Psoas muscle (tissue), 8 donors: ENCODE measurements at regions of chr7 and their contacts with region 1.

Region 1: GRCh38 chr7:112550468-112551060 is 69.8 kb downstream of the LSMEM1 start:
- DNase-seq: no peak
- ATAC-seq: peak in 3 of 4 donors; percentile 37 to 85 (median 70)
- H3K4me3 ChIP-seq: no peak overlapping the region
- H3K27ac ChIP-seq: no peak overlapping the region
- H3K4me1 ChIP-seq: no peaks in the 10 kb centered on the region
- H3K27me3 ChIP-seq: no peaks in the 10 kb centered on the region
- CTCF ChIP-seq: peak; percentile 82

Region 2: GRCh38 chr7:112898432-112899290 is 348.1 kb after region 1 on chr7:
- intact Hi-C with region 1: loop called (anchors 2 to 10 kb)
- DNase-seq: no peak
- ATAC-seq: peak; percentile 63 to 84 (median 72)
- H3K4me3 ChIP-seq: no peak overlapping the region
- H3K27ac ChIP-seq: no peak overlapping the region
- H3K4me1 ChIP-seq: no peaks in the 10 kb centered on the region
- H3K27me3 ChIP-seq: no peaks in the 10 kb centered on the region
- CTCF ChIP-seq: peak; percentile 72

Region 3: DNA sequence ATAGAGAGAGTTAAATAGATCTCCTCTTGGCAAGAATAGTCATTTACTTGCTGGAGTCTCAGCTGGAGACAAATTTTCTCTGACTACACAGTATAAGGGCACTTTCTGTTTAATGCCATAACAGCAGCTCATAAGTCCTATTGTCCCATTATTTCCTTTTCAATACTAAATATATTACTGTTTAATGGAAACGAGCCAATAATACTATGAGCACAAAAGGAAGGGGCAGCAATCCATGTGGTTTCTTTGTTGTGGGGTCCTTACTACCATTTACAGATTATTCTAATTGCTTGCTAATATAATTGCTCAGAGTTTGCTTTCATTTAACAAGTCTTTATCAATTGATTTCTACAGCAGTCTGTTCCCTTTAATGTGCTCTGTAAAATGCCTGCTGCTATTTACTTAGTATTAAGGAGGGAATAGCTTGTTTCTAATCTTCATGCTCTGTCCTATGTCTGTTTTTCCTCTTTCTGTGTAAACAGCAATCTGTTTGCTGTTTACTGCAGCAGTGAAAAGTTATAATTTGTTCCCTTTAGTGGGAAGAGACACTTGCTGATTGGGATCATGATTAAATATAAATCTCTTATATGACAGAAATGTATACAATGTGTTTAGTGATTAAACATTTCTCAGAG is 864.0 kb after region 1 on chr7:
- intact Hi-C with region 1: loop called in 1 of 2 experiments (anchors 10 kb)
- DNase-seq: no peak
- ATAC-seq: no peak
- H3K4me3 ChIP-seq: no peak overlapping the region
- H3K27ac ChIP-seq: no peak overlapping the region
- H3K4me1 ChIP-seq: no peaks in the 10 kb centered on the region
- H3K27me3 ChIP-seq: no peaks in the 10 kb centered on the region
- CTCF ChIP-seq: no peak